Right ventricle myocardium inferior (tissue), 1 donor: ENCODE measurements at regions of chr22 and their contacts with region 1.

Region 1: GRCh38 chr22:20156611-20157429 is 6.0 kb upstream of the CCDC188 start:
- DNase-seq: peak; percentile 86
- ATAC-seq: peak; percentile 60

Region 2: DNA sequence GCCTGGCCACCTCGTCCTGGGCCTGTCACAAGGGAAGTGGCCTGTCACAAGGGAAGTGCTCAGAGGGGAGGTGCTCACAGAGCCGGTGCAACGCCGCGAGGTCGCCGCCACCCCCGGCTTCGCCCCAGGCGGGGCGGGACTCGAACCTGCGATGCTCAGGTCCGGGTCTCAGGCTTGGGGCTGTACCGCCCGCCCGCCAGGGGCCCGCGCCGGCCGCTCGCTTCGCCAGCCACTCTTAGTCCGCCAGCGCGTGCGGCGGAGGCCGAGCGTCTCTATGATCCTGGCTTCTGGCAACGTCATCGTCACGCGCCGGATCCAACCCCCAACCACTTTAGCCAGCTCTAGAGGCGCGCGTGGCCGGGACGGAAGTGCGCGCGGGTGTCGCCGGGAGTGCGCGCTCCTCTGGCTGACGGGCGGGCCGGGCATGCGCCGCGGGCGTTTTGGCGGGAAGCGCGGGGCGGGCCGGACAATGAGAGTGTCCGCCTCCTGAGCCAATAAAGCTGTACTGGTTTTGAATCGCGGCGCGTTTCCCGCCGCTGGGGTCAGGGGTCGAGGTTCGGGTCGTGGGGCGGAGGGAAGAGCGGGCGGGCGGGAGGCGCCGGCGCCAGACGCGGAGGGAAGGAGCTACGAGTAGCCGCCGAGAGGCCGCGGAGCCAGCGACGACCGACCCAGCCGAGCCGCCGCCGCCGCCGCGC is 39.7 kb before region 1 on chr22 and contains the start of gene TRMT2A:
- intact Hi-C with region 1: no loop called
- DNase-seq: peak; percentile 99
- ATAC-seq: peak; percentile 95
- total RNA-seq, gene TRMT2A: 24.5 TPM

Region 3: DNA sequence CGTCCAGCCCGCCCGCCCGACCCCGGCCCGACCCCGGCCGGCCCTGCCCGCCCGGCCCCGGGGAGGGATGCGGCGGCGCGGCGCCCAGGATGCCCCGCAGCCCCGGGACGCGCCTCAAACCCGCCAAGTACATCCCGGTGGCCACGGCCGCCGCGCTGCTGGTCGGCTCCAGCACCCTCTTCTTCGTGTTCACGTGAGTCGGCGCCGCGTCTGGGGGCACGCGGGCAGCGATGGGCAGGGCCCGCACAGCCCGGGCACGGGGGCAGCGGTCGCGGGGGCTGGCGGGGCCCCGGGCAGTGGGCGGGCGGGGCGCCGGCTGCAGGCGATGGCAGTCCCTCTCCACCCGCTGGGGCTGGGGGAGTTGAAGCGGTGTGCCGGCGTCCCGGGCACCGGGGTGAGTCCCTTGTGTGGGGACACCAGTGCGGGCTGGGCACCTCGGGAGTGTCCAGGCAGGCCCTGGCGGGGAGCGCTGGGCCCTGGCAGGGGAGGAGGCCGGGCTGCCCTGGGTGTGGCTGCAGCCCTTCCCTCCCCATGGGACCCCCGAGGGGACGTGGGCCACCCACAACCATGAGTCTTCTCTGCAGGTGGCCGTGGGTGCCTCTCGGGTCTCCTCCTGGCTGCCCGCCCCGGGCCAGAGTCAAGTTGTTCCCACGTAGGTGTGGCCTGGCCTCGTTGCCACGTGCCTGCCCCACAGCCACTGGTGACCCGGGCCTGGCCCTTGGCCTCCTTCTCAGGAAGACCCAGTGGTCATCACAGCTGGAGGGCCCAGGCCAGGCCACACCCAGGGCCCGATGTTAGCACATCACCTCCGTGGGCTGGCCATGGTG is 24.7 kb before region 1 on chr22:
- intact Hi-C with region 1: no loop called
- DNase-seq: peak; percentile 84
- ATAC-seq: no peak

Region 4: DNA sequence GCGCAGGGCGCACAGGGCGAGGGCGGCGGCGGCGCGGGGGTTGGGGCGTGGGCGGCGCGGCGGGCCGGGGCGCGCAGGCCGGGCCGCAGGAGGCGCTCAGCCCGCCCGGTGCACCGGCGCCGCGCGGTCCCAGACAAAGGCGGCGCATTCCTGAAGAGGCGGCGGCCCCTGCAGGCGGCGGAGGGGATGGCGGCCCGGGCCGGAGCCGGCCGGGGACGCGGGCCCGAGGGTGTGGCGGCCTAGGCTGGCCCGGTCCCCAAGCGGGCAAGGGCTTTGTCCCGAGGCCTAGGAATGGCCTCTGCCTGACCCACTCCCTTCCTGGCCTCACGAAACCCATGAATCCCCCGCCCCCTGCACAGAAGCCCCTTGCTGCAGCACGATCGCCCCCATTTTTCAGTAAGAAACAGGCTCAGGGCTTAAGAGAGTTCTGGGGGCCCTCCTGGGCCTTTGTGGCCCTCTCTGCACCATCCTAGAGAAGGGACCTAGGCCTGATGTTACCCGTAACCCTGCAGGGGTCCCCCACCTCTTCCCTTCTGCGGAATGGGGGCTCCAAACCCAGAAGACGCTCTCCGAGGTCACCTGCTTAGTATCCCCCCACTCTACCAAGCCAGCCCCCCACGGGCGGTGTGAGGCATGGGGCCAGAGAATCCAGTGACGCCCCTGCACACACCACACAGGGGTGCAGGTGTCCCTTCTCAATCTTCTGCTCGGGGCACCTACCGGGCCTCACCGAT is 111.6 kb after region 1 on chr22 and contains the start of gene RTN4R:
- intact Hi-C with region 1: loop called (anchors 1 kb)
- DNase-seq: no peak
- ATAC-seq: peak; percentile 86
- total RNA-seq, gene RTN4R: 1.2 TPM

Region 5: DNA sequence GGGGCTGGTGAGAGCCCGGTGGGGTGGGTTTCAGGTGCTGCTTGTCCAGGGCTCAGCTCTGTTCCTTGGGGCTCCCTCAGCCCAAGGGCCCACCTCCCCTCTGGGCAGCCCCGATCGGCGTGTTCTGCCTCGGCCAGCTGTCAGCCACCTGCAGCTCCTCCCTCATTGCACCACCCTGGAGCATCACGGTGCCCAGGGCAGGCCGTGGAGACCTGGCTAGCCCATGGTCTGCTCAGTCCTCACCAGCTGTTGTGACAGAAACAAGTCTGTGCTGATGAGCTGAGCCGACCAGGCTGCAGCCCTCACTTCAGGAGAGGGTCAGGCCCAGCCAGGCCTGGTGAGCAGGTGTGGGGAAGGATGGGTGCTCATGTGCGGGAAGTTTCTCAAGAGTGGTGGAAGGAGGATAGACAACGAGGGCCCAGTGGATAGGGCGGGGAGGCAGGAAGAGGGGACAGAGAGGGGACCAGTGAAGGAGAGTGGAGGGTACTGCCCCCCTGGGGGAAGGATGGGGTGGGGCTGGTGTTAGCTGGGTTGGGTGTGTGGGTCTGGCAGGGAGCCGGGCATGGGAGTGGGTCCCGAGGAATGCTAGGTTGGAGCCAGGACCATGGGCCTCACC is 127.8 kb after region 1 on chr22:
- intact Hi-C with region 1: loop called (anchors 1 kb)
- DNase-seq: no peak
- ATAC-seq: no peak